A549 (cell line): ENCODE measurements at regions of chr15 and their contacts with region 1.

Region 1: GRCh38 chr15:57706405-57707209 is at the start of gene POLR2M:
- DNase-seq: peak; percentile 92 to 97
- ATAC-seq: peak; percentile 94 to 96
- H3K4me3 ChIP-seq: peak within 1 kb of the TSS; percentile 80
- H3K27ac ChIP-seq: peak within 1 kb of the TSS; percentile 98
- H3K4me1 ChIP-seq: peaks cover 11% of the 10 kb centered on the region; the same call in 2 of the 3 replicates
- CTCF ChIP-seq: no peak
- EP300 ChIP-seq: no peak
- POLR2A ChIP-seq: peak; percentile 70
- RAD21 ChIP-seq: 0 out of 5 replicates have a peak, but pooled peaks of 1 of the 2 experiments have one; percentile 2
- polyA plus RNA-seq, gene POLR2M: 99.6 and 107 TPM in 2 replicates

Region 2: DNA sequence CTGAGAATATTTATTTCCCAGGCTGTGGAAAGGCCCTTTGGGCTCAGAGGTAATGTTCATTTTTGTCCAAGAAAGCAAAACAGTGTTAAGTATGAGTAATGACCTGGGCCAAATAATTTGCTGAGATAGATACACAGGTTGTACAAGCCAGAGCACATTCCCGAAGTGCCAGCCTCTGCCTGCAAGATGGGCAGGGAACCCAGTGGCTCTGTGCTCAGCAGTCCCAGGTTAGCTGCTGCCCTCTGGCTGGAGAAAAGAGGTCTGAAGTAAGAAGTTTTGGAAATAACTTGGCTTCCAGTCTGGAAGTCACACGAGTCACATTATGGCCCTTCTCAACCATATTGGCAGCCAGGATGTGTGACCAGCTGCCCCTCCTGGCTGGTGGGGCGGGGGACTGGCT is 94.7 kb before region 1 on chr15:
- CTCF ChIA-PET with region 1: no interaction called
- POLR2A ChIA-PET with region 1: no interaction called
- DNase-seq: peak; percentile 35 to 62
- ATAC-seq: peak; percentile 63 to 75
- H3K4me3 ChIP-seq: no peak overlapping the region
- H3K27ac ChIP-seq: peak overlapping the region in 1 of 2 experiments; percentile 78; a peak in 4 of 6 replicates
- H3K4me1 ChIP-seq: peaks cover 62% of the 10 kb centered on the region
- CTCF ChIP-seq: peak; percentile 64
- EP300 ChIP-seq: no peak
- POLR2A ChIP-seq: no peak
- RAD21 ChIP-seq: peak; percentile 77 to 84

Region 3: GRCh38 chr15:57680021-57680420 is 26.6 kb before region 1 on chr15:
- CTCF ChIA-PET with region 1: interaction called, 3 read pairs
- POLR2A ChIA-PET with region 1: interaction called, 10 read pairs
- DNase-seq: peak in 1 of 2 experiments; percentile 25
- ATAC-seq: peak; percentile 84 to 85
- H3K4me3 ChIP-seq: no peak overlapping the region
- H3K27ac ChIP-seq: peak overlapping the region in 1 of 2 experiments; percentile 14; a peak in 2 of 6 replicates
- H3K4me1 ChIP-seq: 0 out of 3 replicates have a peak, but pooled peaks cover 4% of the 10 kb centered on the region
- CTCF ChIP-seq: no peak
- EP300 ChIP-seq: no peak
- POLR2A ChIP-seq: no peak
- RAD21 ChIP-seq: no peak